ENCODE measurements at regions of chrX and their contacts with region 1.

Region 1: DNA sequence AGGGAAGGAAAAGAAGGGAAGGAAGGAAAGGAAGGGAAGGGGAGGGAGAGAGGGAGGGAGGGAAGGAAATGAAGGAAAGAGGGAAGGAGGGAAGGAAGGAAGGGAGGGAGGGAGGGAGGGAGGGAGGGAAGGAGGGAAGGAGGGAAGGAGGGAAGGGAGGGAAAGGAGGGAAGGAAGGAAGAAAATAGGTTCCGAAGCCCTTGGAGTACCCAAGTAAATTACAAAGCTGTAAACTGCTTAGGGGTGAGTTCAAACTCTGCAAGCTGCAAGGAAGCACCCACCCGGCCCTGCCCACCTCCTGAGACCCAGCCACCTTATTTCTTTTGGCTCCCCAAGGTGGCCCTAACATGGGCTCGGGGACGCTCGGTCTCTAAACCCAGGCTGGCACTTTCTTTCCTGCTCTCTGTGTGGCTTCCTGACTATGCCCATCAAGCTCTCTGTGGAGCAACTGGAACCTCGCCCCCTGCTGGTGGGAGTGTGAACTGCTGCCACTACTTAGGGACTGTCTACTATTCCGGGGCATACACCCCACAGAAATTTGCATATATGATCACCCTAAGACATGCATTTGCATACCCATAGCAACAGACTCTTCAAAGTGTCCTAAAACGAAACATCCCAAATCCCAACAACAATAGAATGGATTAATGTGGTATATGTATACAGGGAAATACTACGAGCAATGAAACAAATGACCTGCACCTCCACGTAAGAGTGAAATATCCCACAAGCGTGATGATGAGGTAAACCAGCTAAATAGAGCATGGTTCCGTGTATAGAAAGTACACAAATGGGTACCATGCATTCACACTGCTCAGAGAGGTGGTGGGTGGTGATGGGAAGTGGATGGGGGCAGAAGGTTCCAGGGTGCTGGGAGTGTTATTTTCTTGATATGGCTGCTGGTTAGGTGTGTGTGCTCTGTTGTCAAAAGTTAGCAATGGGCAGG is 151.7 kb upstream of the TBL1X start:
- DNase-seq: peak; percentile 12 to 69 (median 57)
- ATAC-seq: peak; percentile 83
- H3K4me3 ChIP-seq: no peak overlapping the region
- H3K4me3 Mint-ChIP-seq: peak overlapping the region in 2 of 10 donors; percentile 50 to 56
- H3K27ac ChIP-seq: no peak overlapping the region
- H3K27ac Mint-ChIP-seq: peak overlapping the region in 3 of 9 donors; percentile 26 to 75 (median 66)
- H3K4me1 ChIP-seq: peaks cover 4 to 6% of the 10 kb centered on the region in 2 donors
- H3K4me1 Mint-ChIP-seq: peaks cover 10 to 21% (median 11%) of the 10 kb centered on the region in 7 donors
- H3K27me3 ChIP-seq: no peaks in the 10 kb centered on the region
- H3K27me3 Mint-ChIP-seq: no peaks in the 10 kb centered on the region

Region 2: GRCh38 chrX:9171841-9172463 is 141.2 kb before region 1 on chrX:
- CTCF ChIA-PET with region 1: no interaction called
- POLR2A ChIA-PET with region 1: no interaction called
- intact Hi-C with region 1: no loop called
- DNase-seq: no peak
- ATAC-seq: no peak
- H3K4me3 ChIP-seq: no peak overlapping the region
- H3K4me3 Mint-ChIP-seq: no peak overlapping the region
- H3K27ac ChIP-seq: no peak overlapping the region
- H3K27ac Mint-ChIP-seq: peak overlapping the region in 1 of 9 donors; percentile 33
- H3K4me1 ChIP-seq: no peaks in the 10 kb centered on the region
- H3K4me1 Mint-ChIP-seq: no peaks in the 10 kb centered on the region
- H3K27me3 ChIP-seq: no peaks in the 10 kb centered on the region
- H3K27me3 Mint-ChIP-seq: no peaks in the 10 kb centered on the region

Region 3: GRCh38 chrX:9249051-9249846 is 63.9 kb before region 1 on chrX:
- CTCF ChIA-PET with region 1: no interaction called
- POLR2A ChIA-PET with region 1: no interaction called
- intact Hi-C with region 1: loop called in 1 of 2 experiments (anchors 10 kb)
- DNase-seq: no peak
- ATAC-seq: no peak
- H3K4me3 ChIP-seq: no peak overlapping the region
- H3K4me3 Mint-ChIP-seq: no peak overlapping the region
- H3K27ac ChIP-seq: no peak overlapping the region
- H3K27ac Mint-ChIP-seq: peak overlapping the region in 1 of 9 donors; percentile 14
- H3K4me1 ChIP-seq: no peaks in the 10 kb centered on the region
- H3K4me1 Mint-ChIP-seq: peaks cover 0 to 8% (median 3%) of the 10 kb centered on the region in 7 donors
- H3K27me3 ChIP-seq: no peaks in the 10 kb centered on the region
- H3K27me3 Mint-ChIP-seq: peaks cover 0 to 3% (median 0%) of the 10 kb centered on the region in 5 donors

Region 4: DNA sequence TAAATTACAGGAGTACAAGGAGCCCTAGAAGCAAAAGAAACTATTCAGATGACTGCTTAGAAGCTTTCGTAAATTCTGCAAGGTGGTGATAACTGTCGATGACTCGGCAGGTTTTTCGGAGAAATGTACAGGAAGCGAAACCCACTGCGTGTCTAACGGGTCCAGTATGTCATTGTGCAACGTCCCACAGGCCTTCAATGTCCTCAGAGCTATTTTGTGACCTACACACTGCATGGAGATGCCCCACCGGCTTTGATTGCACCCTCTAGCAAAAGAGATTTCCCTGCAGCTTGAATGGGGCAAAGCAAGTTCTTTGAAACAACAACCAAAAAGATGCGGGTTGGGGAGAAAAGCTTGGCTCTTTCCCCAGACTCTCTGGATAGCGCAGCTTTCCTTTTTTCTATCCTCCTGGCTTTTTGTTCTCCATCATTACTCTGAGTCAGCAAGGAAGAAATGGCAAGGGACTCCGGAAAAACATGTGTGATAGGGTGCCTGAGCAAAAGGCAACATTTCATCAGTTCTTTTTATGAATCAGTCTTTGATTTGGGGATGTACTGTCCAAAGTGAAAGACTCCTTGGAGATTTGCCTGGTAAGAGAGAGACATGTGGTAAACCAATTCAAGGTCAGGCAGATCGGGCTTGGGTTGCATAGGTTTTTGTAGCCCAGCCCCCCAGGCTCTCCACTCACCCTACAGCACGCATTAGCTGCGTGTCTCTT is 39.7 kb after region 1 on chrX:
- CTCF ChIA-PET with region 1: no interaction called
- POLR2A ChIA-PET with region 1: no interaction called
- intact Hi-C with region 1: loop called in 1 of 2 experiments (anchors 5 kb)
- DNase-seq: peak in 4 of 9 donors; percentile 12 to 27 (median 22)
- ATAC-seq: peak; percentile 63
- H3K4me3 ChIP-seq: peak overlapping the region; percentile 8
- H3K4me3 Mint-ChIP-seq: peak overlapping the region; percentile 60 to 82 (median 74)
- H3K27ac ChIP-seq: no peak overlapping the region
- H3K27ac Mint-ChIP-seq: peak overlapping the region in 8 of 9 donors; percentile 74 to 95 (median 82)
- H3K4me1 ChIP-seq: peaks cover 10 to 36% of the 10 kb centered on the region in 2 donors
- H3K4me1 Mint-ChIP-seq: peaks cover 16 to 45% (median 31%) of the 10 kb centered on the region in 7 donors
- H3K27me3 ChIP-seq: no peaks in the 10 kb centered on the region
- H3K27me3 Mint-ChIP-seq: peaks cover 0 to 4% (median 0%) of the 10 kb centered on the region in 5 donors